ENCODE measurements at regions of chr5 and their contacts with region 1.

Region 1: DNA sequence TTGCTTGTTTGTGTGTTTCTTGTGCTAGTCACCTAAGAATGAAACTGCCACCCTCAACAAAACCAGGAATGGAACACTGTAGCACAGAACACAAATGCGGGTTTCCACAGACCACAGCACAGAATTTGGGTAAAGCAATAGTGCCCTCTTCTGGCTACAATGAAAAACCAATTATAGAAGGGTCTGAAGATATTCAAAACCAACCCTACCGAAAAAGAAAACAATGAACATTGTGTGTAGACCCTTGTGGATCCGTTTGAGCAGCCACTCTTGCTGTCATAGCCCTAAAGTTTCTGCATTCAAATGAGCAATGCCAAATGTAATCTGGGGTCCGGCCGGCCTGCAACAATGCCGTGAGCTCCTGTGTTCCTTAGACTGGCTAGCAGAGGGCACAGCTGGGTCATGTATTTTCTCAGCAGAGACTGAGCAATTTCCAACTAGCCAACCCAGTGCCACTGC is 8.3 kb upstream of the ENC1 start:
- DNase-seq: no peak
- H3K4me3 ChIP-seq: no peak overlapping the region
- H3K27ac ChIP-seq: no peak overlapping the region
- H3K4me1 ChIP-seq: peaks cover 15% of the 10 kb centered on the region
- H3K27me3 ChIP-seq: no peaks in the 10 kb centered on the region
- CTCF ChIP-seq: peak; percentile 84

Region 2: DNA sequence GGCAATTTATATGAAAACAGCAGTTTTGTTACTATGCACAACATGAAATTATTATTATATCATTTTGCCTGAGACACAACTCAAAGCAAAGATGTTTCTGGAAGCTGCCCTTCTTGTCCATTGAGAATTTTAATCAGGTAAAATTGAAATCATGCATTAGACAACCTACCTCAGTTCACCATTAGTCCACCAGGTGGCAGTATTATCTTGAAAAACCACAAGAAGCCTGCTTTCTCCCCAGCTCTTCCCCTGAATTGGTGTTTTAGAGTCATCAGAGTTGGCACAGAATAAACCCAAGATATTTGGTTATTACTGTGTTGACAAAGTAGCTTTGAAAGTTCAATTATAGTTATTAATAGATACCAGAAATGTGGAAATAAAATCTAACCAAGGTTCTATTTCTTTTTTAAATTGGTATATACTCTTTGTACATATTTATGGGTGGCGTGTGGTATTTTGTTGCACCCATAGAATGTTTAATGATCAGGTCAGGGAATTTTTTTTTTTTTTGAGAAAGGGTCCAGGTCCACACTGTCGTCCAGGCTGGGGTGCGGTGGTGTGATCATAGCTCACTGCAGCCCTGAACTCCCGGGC is 1057.7 kb before region 1 on chr5:
- intact Hi-C with region 1: loop called (anchors 5 kb)
- DNase-seq: no peak
- H3K4me3 ChIP-seq: no peak overlapping the region
- H3K27ac ChIP-seq: no peak overlapping the region
- H3K4me1 ChIP-seq: no peaks in the 10 kb centered on the region
- H3K27me3 ChIP-seq: no peaks in the 10 kb centered on the region
- CTCF ChIP-seq: peak; percentile 92

Region 3: GRCh38 chr5:73902327-73903051 is 746.4 kb before region 1 on chr5:
- intact Hi-C with region 1: loop called (anchors 2 kb)
- DNase-seq: no peak
- H3K4me3 ChIP-seq: peak overlapping the region; percentile 32
- H3K27ac ChIP-seq: peak overlapping the region; percentile 64
- H3K4me1 ChIP-seq: peaks cover 43% of the 10 kb centered on the region
- H3K27me3 ChIP-seq: peaks cover 4% of the 10 kb centered on the region
- CTCF ChIP-seq: peak; percentile 88

Region 4: DNA sequence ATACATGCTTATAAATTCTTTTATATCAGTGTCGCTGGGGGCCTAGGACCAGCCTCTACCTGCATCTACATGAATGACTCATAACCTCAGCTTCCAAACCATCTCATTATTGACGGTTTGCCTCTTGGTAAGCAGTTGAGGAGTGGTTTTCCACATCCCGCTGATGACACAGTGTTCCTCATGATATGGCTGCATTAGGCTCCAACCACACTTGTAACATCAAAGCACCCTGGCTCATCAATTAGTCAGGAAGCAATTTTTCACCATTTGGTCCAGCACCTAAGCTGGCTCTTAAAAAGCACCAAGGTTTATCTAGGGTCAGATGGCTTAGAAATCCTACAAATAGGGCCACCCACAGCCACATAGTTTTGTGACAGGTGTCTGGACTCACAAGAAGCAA is 620.5 kb before region 1 on chr5:
- intact Hi-C with region 1: loop called (anchors 5 kb)
- DNase-seq: no peak
- H3K4me3 ChIP-seq: no peak overlapping the region
- H3K27ac ChIP-seq: no peak overlapping the region
- H3K4me1 ChIP-seq: no peaks in the 10 kb centered on the region
- H3K27me3 ChIP-seq: peaks cover 19% of the 10 kb centered on the region
- CTCF ChIP-seq: no peak

Region 5: GRCh38 chr5:74261866-74262265 is 387.0 kb before region 1 on chr5:
- intact Hi-C with region 1: no loop called
- DNase-seq: no peak
- H3K4me3 ChIP-seq: no peak overlapping the region
- H3K27ac ChIP-seq: no peak overlapping the region
- H3K4me1 ChIP-seq: peaks cover 18% of the 10 kb centered on the region
- H3K27me3 ChIP-seq: no peaks in the 10 kb centered on the region
- CTCF ChIP-seq: no peak

Measured in left ventricle myocardium inferior (tissue), 1 donor.